ENCODE measurements at regions of chr16 and their contacts with region 1.

Region 1: GRCh38 chr16:1705688-1706385 is at the start of gene MAPK8IP3:
- DNase-seq: peak; percentile 96
- H3K4me3 ChIP-seq: peak within 1 kb of the TSS; percentile 88 to 96 (median 92)
- H3K27ac ChIP-seq: peak within 1 kb of the TSS; percentile 91 to 95 (median 92)
- H3K4me1 ChIP-seq: peaks cover 24 to 53% (median 45%) of the 10 kb centered on the region in 4 donors
- H3K27me3 ChIP-seq: no peaks in the 10 kb centered on the region
- CTCF ChIP-seq: peak in 2 of 3 experiments; percentile 95 to 99
- EP300 ChIP-seq: no peak
- POLR2A ChIP-seq: peak; percentile 95
- total RNA-seq, gene MAPK8IP3: 21.5 to 36.2 (median 28.5) TPM

Region 2: DNA sequence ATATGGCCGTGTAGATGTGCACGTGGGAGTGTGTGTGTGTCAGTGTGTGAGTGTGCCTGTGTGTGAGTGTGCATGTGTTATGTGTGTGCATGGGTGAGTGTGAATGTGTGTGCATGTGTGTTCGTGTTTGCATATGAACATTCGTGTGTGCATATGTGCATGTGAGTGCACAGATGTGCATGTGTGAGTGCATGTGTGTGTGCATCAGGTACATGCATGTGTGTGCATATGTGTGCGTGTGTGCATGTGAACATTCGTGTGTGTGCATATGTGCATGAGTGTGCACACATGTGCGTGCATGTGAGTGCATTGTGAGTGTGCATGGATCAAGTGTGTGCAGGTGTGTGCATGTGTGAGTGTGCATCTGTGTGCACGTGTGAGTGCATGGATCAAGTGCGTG is 467.8 kb before region 1 on chr16:
- intact Hi-C with region 1: no loop called
- DNase-seq: no peak
- H3K4me3 ChIP-seq: no peak overlapping the region
- H3K27ac ChIP-seq: no peak overlapping the region
- H3K4me1 ChIP-seq: no peaks in the 10 kb centered on the region
- H3K27me3 ChIP-seq: peaks cover 0 to 21% (median 0%) of the 10 kb centered on the region in 4 donors
- CTCF ChIP-seq: no peak
- EP300 ChIP-seq: no peak
- POLR2A ChIP-seq: no peak

Region 3: GRCh38 chr16:1408171-1408837 is 297.5 kb before region 1 on chr16:
- intact Hi-C with region 1: loop called (anchors 10 kb)
- DNase-seq: peak; percentile 99
- H3K4me3 ChIP-seq: peak overlapping the region; percentile 45 to 59 (median 52)
- H3K27ac ChIP-seq: peak overlapping the region; percentile 42 to 62 (median 58)
- H3K4me1 ChIP-seq: peaks cover 14 to 46% (median 33%) of the 10 kb centered on the region in 4 donors
- H3K27me3 ChIP-seq: no peaks in the 10 kb centered on the region
- CTCF ChIP-seq: peak in 1 of 3 experiments; percentile 18
- EP300 ChIP-seq: no peak
- POLR2A ChIP-seq: no peak

Region 4: DNA sequence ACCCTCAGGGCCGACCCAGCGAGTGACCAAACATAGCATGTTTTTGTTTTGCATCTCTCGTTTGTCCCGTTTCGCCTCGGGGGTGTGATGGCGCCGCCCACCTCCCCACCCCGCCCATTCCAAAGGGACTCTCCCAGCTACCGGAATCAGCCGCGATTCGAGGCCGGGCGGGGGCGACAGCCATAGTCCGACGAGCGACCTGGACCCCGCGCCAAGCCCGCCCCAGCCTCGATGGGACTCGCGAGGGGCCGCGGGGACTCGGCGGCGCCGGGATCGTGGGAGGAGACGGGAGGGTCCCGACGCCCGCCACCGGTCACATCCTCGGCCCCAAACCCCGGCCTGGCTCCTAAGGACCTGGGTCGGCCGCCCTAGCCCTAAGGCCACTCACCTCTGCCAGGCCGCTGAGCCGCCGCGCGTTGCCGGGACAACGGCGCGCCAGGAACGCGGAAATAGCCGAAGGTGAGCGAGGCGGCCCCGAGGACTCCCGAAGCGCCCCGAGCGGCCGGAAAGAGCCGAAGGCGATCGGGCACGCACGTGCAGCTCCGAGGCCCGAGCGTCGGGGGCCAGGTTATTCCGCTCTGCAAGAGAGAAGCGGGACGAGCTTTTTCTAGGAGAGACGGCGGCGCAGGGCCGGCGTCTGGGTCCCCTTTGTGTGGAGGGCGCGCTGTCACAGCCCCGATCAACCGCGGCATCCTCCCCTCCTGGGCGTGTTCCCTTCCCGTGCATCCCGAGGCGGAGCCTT is 95.4 kb before region 1 on chr16:
- intact Hi-C with region 1: loop called (anchors 10 kb)
- DNase-seq: peak; percentile 96
- H3K4me3 ChIP-seq: peak overlapping the region; percentile 88 to 98 (median 94)
- H3K27ac ChIP-seq: peak overlapping the region; percentile 79 to 94 (median 86)
- H3K4me1 ChIP-seq: peaks cover 36 to 53% (median 46%) of the 10 kb centered on the region in 4 donors
- H3K27me3 ChIP-seq: no peaks in the 10 kb centered on the region
- CTCF ChIP-seq: no peak
- EP300 ChIP-seq: no peak
- POLR2A ChIP-seq: no peak

Region 5: DNA sequence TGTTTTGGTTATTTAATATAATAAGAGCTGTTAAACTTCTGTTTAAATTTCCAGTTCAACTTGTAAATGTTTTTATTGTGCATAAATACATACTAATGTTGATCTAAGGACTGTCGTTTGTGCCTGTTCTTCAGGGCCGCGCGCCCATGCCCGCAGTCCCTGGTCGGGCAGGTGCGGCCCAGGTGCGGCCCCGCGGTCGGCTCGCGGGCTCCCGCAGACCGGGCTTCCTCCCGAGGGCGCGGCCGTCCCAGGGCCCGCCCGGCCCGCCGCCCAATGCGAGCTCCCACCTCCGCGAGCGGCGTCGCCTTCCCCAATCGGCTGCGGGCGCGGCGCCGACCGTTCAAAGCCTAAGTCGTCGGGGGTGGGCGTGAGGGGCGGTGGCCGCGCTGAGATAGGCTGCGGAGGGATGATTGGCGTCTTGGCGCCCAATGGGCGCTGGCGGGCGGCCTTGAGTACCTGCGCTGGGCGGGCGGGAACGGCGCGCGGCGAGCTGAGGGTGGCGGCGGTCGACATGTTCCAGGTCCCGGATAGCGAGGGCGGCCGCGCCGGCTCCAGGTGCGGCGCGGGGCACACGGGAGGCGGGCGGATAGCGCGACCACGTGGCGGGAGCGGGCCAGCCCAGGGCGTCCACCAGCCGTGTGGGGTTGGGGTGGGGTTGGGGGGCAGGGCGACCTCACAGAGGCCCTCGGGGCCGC is 27.9 kb before region 1 on chr16 and contains the start of gene JPT2:
- intact Hi-C with region 1: loop called (anchors 2 kb)
- DNase-seq: peak; percentile 98
- H3K4me3 ChIP-seq: peak within 1 kb of the TSS; percentile 78 to 95 (median 88)
- H3K27ac ChIP-seq: peak within 1 kb of the TSS; percentile 70 to 84 (median 76)
- H3K4me1 ChIP-seq: peaks cover 8 to 30% (median 18%) of the 10 kb centered on the region in 4 donors
- H3K27me3 ChIP-seq: no peaks in the 10 kb centered on the region
- CTCF ChIP-seq: peak in 1 of 3 experiments; percentile 10
- EP300 ChIP-seq: no peak
- POLR2A ChIP-seq: no peak
- total RNA-seq, gene JPT2: 20.8 to 57.5 (median 38.2) TPM

Region 6: DNA sequence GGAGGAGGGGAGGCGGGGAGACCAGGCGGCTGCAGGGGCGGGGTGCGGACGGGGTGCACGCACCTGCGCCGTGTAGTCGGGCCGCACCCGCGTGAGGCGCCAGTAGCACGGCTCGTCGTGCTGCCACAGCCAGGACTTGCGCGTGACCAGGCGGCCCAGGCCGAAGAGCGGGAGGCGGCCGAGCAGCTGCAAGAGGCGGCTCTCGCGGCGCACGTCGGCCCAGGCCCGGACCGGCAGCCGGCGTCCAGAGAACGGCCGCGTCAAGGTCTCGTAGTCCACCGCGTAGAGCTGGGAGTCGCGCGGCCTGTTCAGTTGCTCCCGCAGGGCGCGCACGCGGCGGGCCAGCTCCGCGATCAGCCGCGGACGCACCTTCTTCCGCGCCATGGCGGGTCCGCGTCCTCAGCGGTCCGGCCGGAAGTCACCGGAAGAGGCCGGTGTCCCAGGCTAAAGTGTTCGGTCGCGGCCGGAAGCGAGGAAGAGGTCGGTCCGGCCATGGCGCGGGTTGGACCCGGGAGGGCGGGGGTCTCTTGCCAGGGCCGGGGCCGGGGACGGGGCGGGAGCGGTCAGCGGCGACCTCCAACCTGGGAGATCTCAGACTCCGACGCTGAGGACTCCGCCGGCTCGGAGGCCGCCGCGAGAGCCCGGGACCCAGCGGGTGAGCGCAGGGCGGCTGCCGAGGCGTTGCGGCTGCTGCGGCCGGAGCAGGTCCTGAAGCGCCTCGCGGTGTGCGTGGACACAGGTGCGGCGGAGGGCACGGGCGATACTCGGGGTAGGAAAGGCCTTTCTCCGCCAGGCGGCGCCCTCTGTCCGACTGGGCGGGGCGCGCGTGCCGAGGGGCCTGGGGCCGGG is 67.1 kb after region 1 on chr16 and contains the starts of genes EME2 and MRPS34:
- intact Hi-C with region 1: loop called (anchors 5 kb)
- DNase-seq: no peak
- H3K4me3 ChIP-seq: peak within 1 kb of the TSS; percentile 72 to 100 (median 88)
- H3K27ac ChIP-seq: peak within 1 kb of the TSS; percentile 87 to 95 (median 90)
- H3K4me1 ChIP-seq: peaks cover 36 to 64% (median 57%) of the 10 kb centered on the region in 4 donors
- H3K27me3 ChIP-seq: no peaks in the 10 kb centered on the region
- CTCF ChIP-seq: peak; percentile 67 to 75 (median 72)
- EP300 ChIP-seq: no peak
- POLR2A ChIP-seq: no peak
- total RNA-seq, gene EME2: 5.5 to 10.4 (median 6.5) TPM
- total RNA-seq, gene MRPS34: 47.1 to 75.2 (median 64.2) TPM